MCF 10A (cell line): ENCODE measurements at regions of chr22 and their contacts with region 1.

Region 1: GRCh38 chr22:22587577-22588188 is 28.6 kb upstream of the PRAME start:
- DNase-seq: no peak
- H3K4me3 Mint-ChIP-seq: no peak overlapping the region
- H3K27ac Mint-ChIP-seq: no peak overlapping the region
- H3K4me1 Mint-ChIP-seq: no peaks in the 10 kb centered on the region
- H3K27me3 Mint-ChIP-seq: peaks cover 87% of the 10 kb centered on the region
- CTCF ChIP-seq: no peak

Region 2: GRCh38 chr22:22463855-22464540 is 123.7 kb before region 1 on chr22:
- CTCF ChIA-PET with region 1: interaction called, 18 read pairs
- POLR2A ChIA-PET with region 1: no interaction called
- intact Hi-C with region 1: loop called (anchors 2 kb)
- DNase-seq: peak; percentile 71
- H3K4me3 Mint-ChIP-seq: no peak overlapping the region
- H3K27ac Mint-ChIP-seq: no peak overlapping the region
- H3K4me1 Mint-ChIP-seq: peaks cover 3% of the 10 kb centered on the region
- H3K27me3 Mint-ChIP-seq: peaks cover 36% of the 10 kb centered on the region
- CTCF ChIP-seq: peak; percentile 69

Region 3: DNA sequence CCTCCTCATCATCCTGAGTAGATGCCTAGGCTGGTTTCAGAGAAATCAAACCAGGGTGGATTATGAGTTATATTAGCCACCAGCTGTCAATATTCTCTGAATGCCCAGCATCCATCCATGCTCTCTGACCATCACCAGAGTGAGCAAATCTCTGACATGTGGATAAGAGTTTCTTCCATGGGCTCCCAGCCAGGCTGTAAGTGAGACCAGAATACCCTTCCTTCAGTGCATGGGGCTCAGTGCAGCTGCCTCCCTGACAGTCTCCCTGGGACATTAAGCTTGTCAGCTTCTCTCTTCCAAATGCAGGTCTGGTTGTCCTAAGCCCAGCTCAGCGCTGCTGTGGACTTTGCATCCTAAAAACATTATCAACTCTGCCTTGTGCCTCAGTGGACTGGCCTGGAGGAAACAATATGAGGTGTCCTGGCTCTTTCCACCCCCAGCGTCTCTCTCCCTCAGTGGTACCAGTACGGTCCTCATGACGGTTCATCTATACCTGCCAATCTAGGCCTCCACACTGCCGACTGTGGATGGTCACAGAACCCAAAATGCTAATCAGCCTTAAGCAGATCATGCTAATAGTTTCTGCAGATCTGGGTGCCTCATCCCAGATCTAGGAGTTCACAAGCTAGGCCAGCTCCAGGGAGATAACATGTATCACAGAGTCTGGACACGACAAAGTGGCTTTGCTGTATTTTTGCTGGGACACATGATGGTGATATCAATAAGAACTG is 13.0 kb after region 1 on chr22:
- CTCF ChIA-PET with region 1: interaction called, 13 read pairs
- POLR2A ChIA-PET with region 1: no interaction called
- intact Hi-C with region 1: no loop called
- DNase-seq: no peak
- H3K4me3 Mint-ChIP-seq: no peak overlapping the region
- H3K27ac Mint-ChIP-seq: no peak overlapping the region
- H3K4me1 Mint-ChIP-seq: no peaks in the 10 kb centered on the region
- H3K27me3 Mint-ChIP-seq: peaks cover 22% of the 10 kb centered on the region
- CTCF ChIP-seq: no peak

Region 4: GRCh38 chr22:22692707-22693530 is 105.2 kb after region 1 on chr22:
- CTCF ChIA-PET with region 1: interaction called, 30 read pairs
- POLR2A ChIA-PET with region 1: no interaction called
- intact Hi-C with region 1: loop called (anchors 5 kb)
- DNase-seq: peak; percentile 86
- H3K4me3 Mint-ChIP-seq: no peak overlapping the region
- H3K27ac Mint-ChIP-seq: peak overlapping the region; percentile 3
- H3K4me1 Mint-ChIP-seq: peaks cover 15% of the 10 kb centered on the region
- H3K27me3 Mint-ChIP-seq: no peaks in the 10 kb centered on the region
- CTCF ChIP-seq: peak; percentile 75

Region 5: DNA sequence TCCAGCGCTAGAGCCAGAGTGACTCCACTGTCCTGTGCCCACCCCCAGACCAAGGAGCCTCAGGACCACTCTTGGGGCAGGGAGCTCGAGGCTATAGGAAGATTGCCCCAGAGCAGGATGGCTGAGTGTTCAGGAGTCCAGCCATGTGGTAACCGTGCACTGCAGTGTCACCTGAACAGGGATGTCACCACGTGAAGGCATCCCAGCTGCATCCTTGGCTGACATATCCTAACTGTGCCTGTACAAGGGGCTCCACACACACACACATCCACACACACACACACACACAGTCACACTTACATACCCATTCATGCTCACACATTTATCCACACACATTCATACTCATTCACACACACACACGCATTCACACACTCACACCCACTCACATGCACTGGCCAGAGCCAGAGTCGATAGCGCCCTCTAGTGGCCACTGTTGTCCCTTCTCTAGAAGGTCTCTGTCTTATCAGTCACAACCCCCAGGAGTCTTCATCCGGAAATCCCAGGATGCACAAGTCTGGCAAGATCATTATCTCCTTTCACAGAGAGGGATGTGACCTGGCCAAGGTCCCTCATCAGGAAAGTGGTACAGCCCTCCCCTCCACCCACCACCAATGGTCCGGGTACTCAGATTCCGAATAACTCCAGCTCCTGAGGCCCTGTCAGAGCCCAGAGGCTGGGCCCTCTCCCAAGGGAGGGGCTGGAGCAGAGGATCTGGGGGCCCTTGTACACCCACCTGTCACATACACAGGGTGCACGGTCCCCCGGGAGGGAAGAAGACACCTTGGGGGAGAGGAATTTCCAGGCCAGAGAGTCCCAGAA is 355.0 kb after region 1 on chr22:
- CTCF ChIA-PET with region 1: interaction called, 10 read pairs
- POLR2A ChIA-PET with region 1: no interaction called
- intact Hi-C with region 1: no loop called
- DNase-seq: peak; percentile 64
- H3K4me3 Mint-ChIP-seq: no peak overlapping the region
- H3K27ac Mint-ChIP-seq: no peak overlapping the region
- H3K4me1 Mint-ChIP-seq: no peaks in the 10 kb centered on the region
- H3K27me3 Mint-ChIP-seq: peaks cover 47% of the 10 kb centered on the region
- CTCF ChIP-seq: peak; percentile 75